Activated T-helper 1 cell treated with anti-CD3 and anti-CD28 coated beads, Interleukin-12 subunit alpha, Interleukin-12 subunit beta, Interleukin-2, Interleukin-4 antibody, amounts not matched to agents 30 ng/mL and 10 ng/mL and 1 ng/mL, durations not matched to agents 14 hours and 24 hours and 36 hours (primary cell): ENCODE measurements at regions of chr14 and their contacts with region 1.

Region 1: GRCh38 chr14:30588873-30589272 is 29.9 kb downstream of the G2E3 start:
- DNase-seq: no peak
- H3K4me3 Mint-ChIP-seq: no peak overlapping the region
- H3K27ac Mint-ChIP-seq: peak overlapping the region; percentile 10
- H3K4me1 Mint-ChIP-seq: peaks cover 11% of the 10 kb centered on the region
- H3K27me3 Mint-ChIP-seq: no peaks in the 10 kb centered on the region

Region 2: DNA sequence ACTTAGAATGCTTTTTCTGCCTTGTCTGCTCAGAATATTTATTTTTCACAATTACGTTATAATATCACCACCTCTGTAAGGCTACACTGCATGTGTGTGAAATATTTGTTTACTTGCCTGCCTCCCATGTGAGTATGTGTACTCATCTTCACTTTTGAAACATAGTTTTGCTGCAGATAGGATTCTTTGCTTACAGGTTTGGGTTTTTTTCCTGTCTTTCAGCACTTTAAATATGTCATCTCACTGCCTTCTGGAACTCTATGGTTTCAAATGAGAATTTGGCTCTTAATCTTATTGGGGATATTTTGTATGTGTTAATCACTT is 19.0 kb before region 1 on chr14:
- intact Hi-C with region 1: loop called (anchors 2 kb)
- DNase-seq: no peak
- H3K4me3 Mint-ChIP-seq: no peak overlapping the region
- H3K27ac Mint-ChIP-seq: no peak overlapping the region
- H3K4me1 Mint-ChIP-seq: peaks cover 61% of the 10 kb centered on the region
- H3K27me3 Mint-ChIP-seq: no peaks in the 10 kb centered on the region